GM12878 (cell line): ENCODE measurements at regions of chr16 and their contacts with region 1.

Region 1: GRCh38 chr16:14101415-14101814 is 30.3 kb downstream of the MRTFB start:
- DNase-seq: no peak
- ATAC-seq: peak; percentile 78
- H3K4me3 ChIP-seq: no peak overlapping the region
- H3K27ac ChIP-seq: no peak overlapping the region
- H3K4me1 ChIP-seq: peaks cover 23% of the 10 kb centered on the region
- H3K27me3 ChIP-seq: no peaks in the 10 kb centered on the region
- CTCF ChIP-seq: no peak
- EP300 ChIP-seq: no peak
- POLR2A ChIP-seq: no peak
- RAD21 ChIP-seq: no peak

Region 2: GRCh38 chr16:14088155-14088753 is 13.2 kb before region 1 on chr16:
- CTCF ChIA-PET with region 1: interaction called, 7 read pairs
- POLR2A ChIA-PET with region 1: no interaction called
- RAD21 ChIA-PET with region 1: no interaction called
- SMC1A ChIA-PET with region 1: interaction called, 25 read pairs
- in situ Hi-C with region 1: no loop called
- intact Hi-C with region 1: no loop called
- DNase-seq: no peak
- ATAC-seq: no peak
- H3K4me3 ChIP-seq: no peak overlapping the region
- H3K27ac ChIP-seq: no peak overlapping the region
- H3K4me1 ChIP-seq: no peaks in the 10 kb centered on the region
- H3K27me3 ChIP-seq: no peaks in the 10 kb centered on the region
- CTCF ChIP-seq: no peak
- EP300 ChIP-seq: no peak
- POLR2A ChIP-seq: no peak
- RAD21 ChIP-seq: no peak

Region 3: GRCh38 chr16:14121142-14121541 is 19.7 kb after region 1 on chr16:
- CTCF ChIA-PET with region 1: no interaction called
- POLR2A ChIA-PET with region 1: interaction called, 4 read pairs
- RAD21 ChIA-PET with region 1: interaction called, 4 read pairs
- SMC1A ChIA-PET with region 1: interaction called, 13 read pairs
- in situ Hi-C with region 1: no loop called
- intact Hi-C with region 1: no loop called
- DNase-seq: peak; percentile 28
- ATAC-seq: peak; percentile 67
- H3K4me3 ChIP-seq: peak overlapping the region; percentile 16; the same call in 1 of the 2 replicates
- H3K27ac ChIP-seq: peak overlapping the region; percentile 29; the same call in 1 of the 2 replicates
- H3K4me1 ChIP-seq: peaks cover 9% of the 10 kb centered on the region
- H3K27me3 ChIP-seq: no peaks in the 10 kb centered on the region
- CTCF ChIP-seq: no peak
- EP300 ChIP-seq: peak in 1 of 2 experiments; percentile 24; a peak in 1 of 4 replicates
- POLR2A ChIP-seq: no peak
- RAD21 ChIP-seq: no peak

Region 4: GRCh38 chr16:14364386-14365204 is 263.2 kb after region 1 on chr16:
- CTCF ChIA-PET with region 1: no interaction called
- POLR2A ChIA-PET with region 1: no interaction called
- RAD21 ChIA-PET with region 1: no interaction called
- SMC1A ChIA-PET with region 1: no interaction called
- in situ Hi-C with region 1: no loop called
- intact Hi-C with region 1: no loop called
- DNase-seq: no peak
- ATAC-seq: no peak
- H3K4me3 ChIP-seq: no peak overlapping the region
- H3K27ac ChIP-seq: no peak overlapping the region
- H3K4me1 ChIP-seq: peaks cover 10% of the 10 kb centered on the region
- H3K27me3 ChIP-seq: no peaks in the 10 kb centered on the region
- CTCF ChIP-seq: 0 out of 6 replicates have a peak, but pooled peaks of 1 of the 3 experiments have one; percentile 2
- EP300 ChIP-seq: no peak
- POLR2A ChIP-seq: no peak
- RAD21 ChIP-seq: 0 out of 2 replicates have a peak, but pooled peaks have one; percentile 10